Left ventricle myocardium superior (tissue), 1 donor: ENCODE measurements at regions of chr9 and their contacts with region 1.

Region 1: GRCh38 chr9:133485361-133486260 is 6.7 kb upstream of the SLC2A6 start:
- DNase-seq: peak; percentile 26
- ATAC-seq: peak; percentile 7

Region 2: GRCh38 chr9:133184962-133185361 is 300.6 kb before region 1 on chr9:
- intact Hi-C with region 1: loop called (anchors 10 kb)
- DNase-seq: no peak
- ATAC-seq: peak; percentile 87

Region 3: GRCh38 chr9:133406480-133407307 is 78.9 kb before region 1 on chr9:
- intact Hi-C with region 1: loop called (anchors 10 kb)
- DNase-seq: peak; percentile 81
- ATAC-seq: peak; percentile 82